Psoas muscle (tissue), 8 donors: ENCODE measurements at regions of chr10 and their contacts with region 1.

Region 1: GRCh38 chr10:78004215-78005026 is 24.9 kb downstream of the POLR3A start:
- DNase-seq: peak in 1 of 2 donors; percentile 23
- ATAC-seq: peak; percentile 41 to 75 (median 66)
- H3K4me3 ChIP-seq: no peak overlapping the region
- H3K27ac ChIP-seq: peak overlapping the region; percentile 86
- H3K4me1 ChIP-seq: peaks cover 34% of the 10 kb centered on the region
- H3K27me3 ChIP-seq: no peaks in the 10 kb centered on the region
- CTCF ChIP-seq: peak; percentile 33

Region 2: DNA sequence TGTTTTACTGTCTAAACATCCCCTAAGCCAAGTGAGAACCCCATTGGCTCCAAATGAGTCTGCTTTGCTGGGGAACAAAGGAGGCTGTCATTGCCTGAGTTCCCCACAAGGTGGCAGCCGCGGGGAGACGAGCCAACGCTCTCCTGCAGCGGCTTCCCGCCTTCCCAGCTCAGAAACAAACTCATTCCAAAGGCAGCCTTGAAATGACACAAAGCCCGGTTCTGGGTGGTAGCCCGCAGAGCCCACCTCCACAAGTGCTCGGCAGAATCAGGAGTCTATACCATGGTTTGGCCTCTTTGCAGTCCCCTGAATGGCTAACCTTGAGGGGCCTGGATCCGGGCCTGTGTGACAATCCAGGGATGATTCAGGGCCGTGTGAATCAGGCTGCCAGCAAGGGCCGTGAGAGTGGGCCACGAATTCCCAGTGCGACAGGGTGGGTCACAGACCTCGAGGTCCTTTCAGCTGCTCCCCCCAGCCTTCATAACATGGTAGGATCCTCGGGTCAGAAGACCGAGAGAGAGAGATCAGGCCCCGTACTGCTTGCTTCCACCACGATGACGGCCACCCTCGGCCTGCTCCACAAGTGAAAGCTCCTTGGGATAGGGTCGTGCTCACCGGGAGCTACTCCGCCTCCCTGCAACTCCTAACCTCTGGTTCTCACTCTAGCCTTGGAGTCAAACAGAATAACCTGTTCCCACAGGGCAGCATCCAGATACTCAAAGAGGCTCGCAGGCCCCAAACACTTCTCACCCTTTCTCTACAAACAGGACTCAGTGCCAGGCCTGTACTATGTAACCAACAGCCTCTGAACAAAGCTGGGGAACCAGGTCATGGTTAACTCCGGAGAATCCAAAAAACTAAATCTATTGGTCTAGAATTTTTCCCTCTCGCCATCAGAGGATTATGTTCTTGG is 157.4 kb before region 1 on chr10:
- intact Hi-C with region 1: loop called (anchors 2 to 5 kb)
- DNase-seq: peak; percentile 77 to 85
- ATAC-seq: peak; percentile 71 to 90 (median 82)
- H3K4me3 ChIP-seq: no peak overlapping the region
- H3K27ac ChIP-seq: peak overlapping the region; percentile 66
- H3K4me1 ChIP-seq: peaks cover 7% of the 10 kb centered on the region
- H3K27me3 ChIP-seq: no peaks in the 10 kb centered on the region
- CTCF ChIP-seq: peak; percentile 98

Region 3: DNA sequence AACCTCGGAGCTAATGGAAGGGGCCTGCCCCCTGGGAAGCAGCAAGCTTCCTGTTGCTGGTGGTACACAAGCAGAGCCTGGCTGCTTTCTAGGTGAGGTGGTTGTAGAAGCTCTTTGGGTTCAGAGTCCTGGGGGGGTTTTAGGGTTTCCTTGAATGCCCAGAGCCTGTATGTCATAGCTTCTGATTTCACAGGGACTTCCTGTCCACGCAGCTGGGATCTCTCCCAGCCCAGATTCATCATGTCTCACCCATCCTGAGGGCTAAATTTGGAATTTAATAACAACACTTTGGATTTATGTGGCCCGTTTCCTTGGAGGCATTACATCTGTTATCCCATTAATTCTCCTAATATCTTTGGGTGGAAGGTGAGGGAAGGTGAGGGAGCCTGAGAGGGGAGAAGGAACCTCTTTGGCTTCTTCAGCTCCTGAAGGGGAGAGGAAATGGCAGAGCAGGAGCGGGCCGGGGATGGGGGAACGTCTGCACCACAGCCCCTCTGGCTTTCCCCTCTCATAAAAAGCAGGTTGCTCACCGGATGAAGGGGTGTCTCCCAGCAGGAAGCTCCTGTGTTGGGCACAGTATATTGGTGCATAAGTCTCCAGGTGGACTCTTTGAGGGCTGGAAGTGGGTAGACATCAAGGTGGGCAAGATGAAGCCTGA is 48.9 kb after region 1 on chr10:
- intact Hi-C with region 1: no loop called
- DNase-seq: no peak
- ATAC-seq: no peak
- H3K4me3 ChIP-seq: no peak overlapping the region
- H3K27ac ChIP-seq: no peak overlapping the region
- H3K4me1 ChIP-seq: no peaks in the 10 kb centered on the region
- H3K27me3 ChIP-seq: no peaks in the 10 kb centered on the region
- CTCF ChIP-seq: no peak